ENCODE measurements at regions of chr11 and their contacts with region 1.

Region 1: DNA sequence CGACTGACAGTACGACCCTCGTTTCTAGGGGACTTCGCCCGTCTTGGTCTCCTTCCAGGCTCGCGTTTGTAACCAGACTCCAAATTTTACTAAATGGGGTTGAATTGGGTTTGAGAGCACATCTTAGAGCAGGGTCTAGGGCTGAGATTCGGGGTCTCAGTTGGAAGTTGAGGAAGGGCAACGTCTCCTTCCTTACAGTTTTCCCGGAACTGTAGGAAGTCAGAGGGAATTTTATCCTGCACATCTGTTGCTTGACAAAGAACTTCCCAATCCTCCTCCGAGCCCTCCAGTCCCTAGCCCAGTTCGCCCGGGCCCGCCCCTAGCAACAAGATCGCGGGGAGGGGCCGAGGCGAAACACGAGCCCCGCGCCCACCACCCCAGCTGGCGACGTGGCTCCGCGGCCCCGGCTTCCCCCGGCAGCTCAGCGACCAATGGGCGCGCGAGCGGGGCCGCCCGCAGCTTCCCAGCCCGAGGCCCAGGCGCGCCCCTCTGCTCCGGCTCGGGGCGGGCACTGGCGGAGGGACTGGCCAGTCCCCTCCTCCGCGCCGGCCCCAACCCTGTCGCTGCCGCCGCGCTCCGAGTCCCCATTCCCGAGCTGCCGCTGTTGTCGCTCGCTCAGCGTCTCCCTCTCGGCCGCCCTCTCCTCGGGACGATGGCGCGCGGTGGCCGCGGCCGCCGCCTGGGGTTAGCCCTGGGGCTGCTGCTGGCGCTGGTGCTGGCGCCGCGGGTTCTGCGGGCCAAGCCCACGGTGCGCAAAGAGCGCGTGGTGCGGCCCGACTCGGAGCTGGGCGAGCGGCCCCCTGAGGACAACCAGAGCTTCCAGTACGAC is at the start of gene RCN1:
- DNase-seq: peak; percentile 88
- H3K4me3 ChIP-seq: peak within 1 kb of the TSS; percentile 57 to 84 (median 72)
- H3K27ac ChIP-seq: peak within 1 kb of the TSS; percentile 86
- H3K4me1 ChIP-seq: peaks cover 45% of the 10 kb centered on the region
- H3K27me3 ChIP-seq: no peaks in the 10 kb centered on the region
- CTCF ChIP-seq: no peak
- POLR2A ChIP-seq: peak; percentile 34
- total RNA-seq, gene RCN1: 254 and 285 TPM in 2 replicates

Region 2: DNA sequence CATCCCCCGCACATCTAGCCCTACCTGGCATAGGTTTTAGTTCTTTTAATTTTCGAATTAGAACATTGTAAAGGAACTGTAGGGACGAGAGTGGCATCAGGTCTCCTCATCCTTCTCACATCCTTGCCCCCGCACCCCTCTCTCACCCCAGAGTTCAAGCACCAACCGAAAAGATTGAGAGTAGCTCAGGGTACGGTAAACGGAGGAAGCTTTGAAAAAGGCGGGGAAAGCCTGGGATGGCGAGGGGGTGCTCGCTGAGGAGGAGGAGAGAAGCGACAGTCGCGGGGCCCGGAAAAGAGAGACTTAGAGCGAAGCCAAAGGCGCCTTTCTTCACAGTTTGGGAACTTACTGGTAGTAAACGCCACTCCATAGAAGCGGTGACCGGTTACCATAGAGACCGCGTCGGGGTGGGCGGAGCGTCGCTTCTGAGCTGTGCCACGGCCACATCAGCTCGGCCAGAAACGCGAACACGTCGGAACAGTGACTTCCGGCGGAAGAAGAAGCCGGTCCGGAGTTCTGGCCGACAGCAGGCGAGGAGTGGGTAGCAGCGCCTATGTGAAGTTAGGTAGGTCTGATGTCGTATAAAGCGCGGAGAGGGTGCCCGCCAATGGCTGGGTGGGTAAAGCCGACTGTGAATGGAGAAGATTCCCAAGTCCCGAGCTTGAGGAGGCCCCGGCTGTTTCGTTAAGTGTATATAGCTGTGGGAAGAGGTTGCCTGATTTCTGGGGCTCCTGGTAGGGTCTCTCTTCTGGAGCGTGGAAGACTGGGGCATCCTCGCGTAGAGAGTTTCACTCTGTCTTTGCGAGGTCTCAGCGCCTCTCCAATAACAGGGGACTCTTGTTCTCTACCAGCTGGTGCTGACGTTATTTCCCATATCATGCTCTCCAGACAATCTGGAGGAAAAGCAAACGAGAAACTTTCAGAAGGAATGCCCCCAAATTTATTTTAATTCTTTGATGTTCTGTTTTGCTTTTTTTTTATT is 721.1 kb before region 1 on chr11 and contains the starts of genes DCDC1 and DNAJC24:
- CTCF ChIA-PET with region 1: no interaction called
- POLR2A ChIA-PET with region 1: no interaction called
- dilution Hi-C with region 1: no loop called
- intact Hi-C with region 1: loop called (anchors 5 kb)
- DNase-seq: peak; percentile 93
- H3K4me3 ChIP-seq: peak within 1 kb of the TSS; percentile 79 to 90 (median 84)
- H3K27ac ChIP-seq: peak within 1 kb of the TSS; percentile 79
- H3K4me1 ChIP-seq: peaks cover 6% of the 10 kb centered on the region
- H3K27me3 ChIP-seq: peaks cover 9 to 31% of the 10 kb centered on the region in 2 experiments
- CTCF ChIP-seq: no peak
- POLR2A ChIP-seq: peak; percentile 83
- total RNA-seq, gene DCDC1: not detected in 2 replicates
- total RNA-seq, gene DNAJC24: 16.8 and 17.0 TPM in 2 replicates

Region 3: GRCh38 chr11:31509429-31510345 is 581.1 kb before region 1 on chr11 and contains the starts of genes ELP4 and IMMP1L:
- CTCF ChIA-PET with region 1: no interaction called
- POLR2A ChIA-PET with region 1: no interaction called
- dilution Hi-C with region 1: no loop called
- intact Hi-C with region 1: loop called (anchors 5 kb)
- DNase-seq: peak; percentile 99
- H3K4me3 ChIP-seq: peak within 1 kb of the TSS; percentile 31 to 99 (median 98)
- H3K27ac ChIP-seq: peak within 1 kb of the TSS; percentile 16
- H3K4me1 ChIP-seq: peaks cover 11% of the 10 kb centered on the region
- H3K27me3 ChIP-seq: no peaks in the 10 kb centered on the region
- CTCF ChIP-seq: no peak
- POLR2A ChIP-seq: peak; percentile 88
- total RNA-seq, gene ELP4: 14.1 and 16.3 TPM in 2 replicates
- total RNA-seq, gene IMMP1L: 14.8 and 16.8 TPM in 2 replicates

Region 4: GRCh38 chr11:31810779-31811647 is 279.7 kb before region 1 on chr11 and contains the start of gene PAX6:
- CTCF ChIA-PET with region 1: no interaction called
- POLR2A ChIA-PET with region 1: no interaction called
- dilution Hi-C with region 1: no loop called
- intact Hi-C with region 1: loop called (anchors 5 kb)
- DNase-seq: peak; percentile 66
- H3K4me3 ChIP-seq: peak within 1 kb of the TSS in 1 of 3 experiments; percentile 11
- H3K27ac ChIP-seq: no peak within 1 kb of the TSS
- H3K4me1 ChIP-seq: peaks cover 4% of the 10 kb centered on the region
- H3K27me3 ChIP-seq: peaks cover 89 to 99% of the 10 kb centered on the region in 2 experiments
- CTCF ChIP-seq: no peak
- POLR2A ChIP-seq: no peak
- total RNA-seq, gene PAX6: not detected in 2 replicates

Region 5: GRCh38 chr11:32052218-32052617 is 38.5 kb before region 1 on chr11:
- CTCF ChIA-PET with region 1: interaction called, 16 read pairs
- POLR2A ChIA-PET with region 1: no interaction called
- dilution Hi-C with region 1: no loop called
- intact Hi-C with region 1: loop called (anchors 2 kb)
- DNase-seq: peak; percentile 61
- H3K4me3 ChIP-seq: no peak overlapping the region
- H3K27ac ChIP-seq: no peak overlapping the region
- H3K4me1 ChIP-seq: no peaks in the 10 kb centered on the region
- H3K27me3 ChIP-seq: peaks cover 28 to 30% of the 10 kb centered on the region in 2 experiments
- CTCF ChIP-seq: peak; percentile 57 to 69
- POLR2A ChIP-seq: no peak

Region 6: DNA sequence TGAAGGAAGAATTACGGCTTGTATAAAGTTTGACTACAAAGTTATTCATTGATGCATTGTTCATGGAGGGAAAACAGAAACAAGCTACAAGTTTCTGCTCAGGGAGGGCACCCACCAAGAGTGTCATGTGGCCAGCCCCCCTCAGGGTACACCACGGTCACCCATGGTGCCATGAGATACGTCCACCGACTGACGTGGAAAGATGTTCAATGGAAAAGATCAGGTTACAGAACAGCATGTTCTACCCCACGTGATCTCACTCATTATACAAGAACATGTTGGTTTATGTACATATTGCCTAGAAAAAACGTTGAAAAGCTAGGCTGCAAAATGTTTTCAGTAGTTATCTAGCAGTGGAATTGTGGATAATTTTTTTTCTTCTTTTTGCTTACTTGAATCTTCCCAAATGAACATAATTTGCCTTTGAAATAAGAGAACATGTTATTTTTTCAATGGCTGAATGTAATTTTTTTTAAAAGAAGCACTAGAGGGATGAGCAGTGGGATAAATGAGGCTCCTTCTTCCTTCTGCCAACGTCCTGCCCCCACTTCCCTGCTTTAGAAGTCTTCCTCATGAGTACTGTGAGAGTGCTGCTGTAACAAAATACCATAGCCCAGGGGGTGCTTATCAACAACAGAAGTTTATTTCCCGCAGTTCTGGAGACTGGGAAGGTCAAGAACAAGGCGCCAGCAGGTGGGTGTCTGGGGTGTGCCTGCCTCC is 22.6 kb after region 1 on chr11:
- CTCF ChIA-PET with region 1: no interaction called
- POLR2A ChIA-PET with region 1: no interaction called
- dilution Hi-C with region 1: no loop called
- intact Hi-C with region 1: no loop called
- DNase-seq: no peak
- H3K4me3 ChIP-seq: no peak overlapping the region
- H3K27ac ChIP-seq: no peak overlapping the region
- H3K4me1 ChIP-seq: no peaks in the 10 kb centered on the region
- H3K27me3 ChIP-seq: peaks cover 8 to 9% of the 10 kb centered on the region in 2 experiments
- CTCF ChIP-seq: no peak
- POLR2A ChIP-seq: no peak

Region 7: GRCh38 chr11:32137263-32137662 is 46.5 kb after region 1 on chr11:
- CTCF ChIA-PET with region 1: interaction called, 5 read pairs
- POLR2A ChIA-PET with region 1: no interaction called
- dilution Hi-C with region 1: no loop called
- intact Hi-C with region 1: loop called (anchors 1 kb)
- DNase-seq: peak; percentile 81
- H3K4me3 ChIP-seq: no peak overlapping the region
- H3K27ac ChIP-seq: peak overlapping the region; percentile 84
- H3K4me1 ChIP-seq: peaks cover 14% of the 10 kb centered on the region
- H3K27me3 ChIP-seq: no peaks in the 10 kb centered on the region
- CTCF ChIP-seq: no peak
- POLR2A ChIP-seq: no peak

Region 8: GRCh38 chr11:32893343-32894148 is 802.8 kb after region 1 on chr11:
- CTCF ChIA-PET with region 1: no interaction called
- POLR2A ChIA-PET with region 1: no interaction called
- dilution Hi-C with region 1: no loop called
- intact Hi-C with region 1: loop called (anchors 10 kb)
- DNase-seq: peak; percentile 56
- H3K4me3 ChIP-seq: peak overlapping the region; percentile 82 to 98 (median 93)
- H3K27ac ChIP-seq: peak overlapping the region; percentile 89
- H3K4me1 ChIP-seq: peaks cover 13% of the 10 kb centered on the region
- H3K27me3 ChIP-seq: no peaks in the 10 kb centered on the region
- CTCF ChIP-seq: peak; percentile 45 to 55
- POLR2A ChIP-seq: no peak